Activated T-helper 1 cell treated with anti-CD3 and anti-CD28 coated beads, Interleukin-12 subunit alpha, Interleukin-12 subunit beta, Interleukin-2, Interleukin-4 antibody, amounts not matched to agents 30 ng/mL and 10 ng/mL and 1 ng/mL, durations not matched to agents 14 hours and 24 hours and 36 hours (primary cell): ENCODE measurements at regions of chr6 and their contacts with region 1.

Region 1: DNA sequence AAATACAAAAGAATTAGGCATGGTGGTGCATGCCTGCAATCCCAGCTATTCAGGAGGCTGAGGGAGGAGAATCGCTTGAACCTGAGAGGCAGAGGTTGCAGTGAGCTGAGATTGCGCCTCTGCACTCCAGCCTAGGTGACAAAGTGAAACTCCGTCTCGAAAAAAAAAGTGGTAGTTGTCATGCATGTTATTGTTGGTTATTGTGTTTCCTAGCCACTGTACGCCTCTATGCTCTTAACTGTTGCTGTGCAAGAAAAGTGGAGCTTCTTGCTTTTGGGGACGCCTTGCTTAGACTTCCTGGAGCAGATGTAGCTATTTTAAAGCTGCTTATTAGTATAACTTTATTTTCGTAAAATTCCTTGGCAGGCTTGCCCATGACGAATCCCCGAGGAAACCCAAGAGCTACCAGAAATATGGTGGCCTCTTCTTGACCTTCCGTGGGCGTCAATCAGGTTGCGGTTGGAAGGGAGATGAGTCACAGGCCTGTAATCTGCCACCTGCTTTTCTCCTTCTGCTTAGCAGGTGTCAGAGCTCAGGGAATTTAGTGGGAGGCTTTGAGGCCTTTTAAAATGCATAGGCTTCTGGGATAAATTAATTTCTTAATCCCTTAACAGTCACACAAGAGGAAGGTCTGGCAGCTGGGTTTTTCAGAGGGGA is 17.3 kb downstream of the GABRR2 start:
- DNase-seq: peak; percentile 64
- H3K4me3 Mint-ChIP-seq: peak overlapping the region; percentile 43
- H3K27ac Mint-ChIP-seq: peak overlapping the region; percentile 97
- H3K4me1 Mint-ChIP-seq: peaks cover 28% of the 10 kb centered on the region
- H3K27me3 Mint-ChIP-seq: peaks cover 2% of the 10 kb centered on the region

Region 2: GRCh38 chr6:89117211-89118108 is 180.4 kb before region 1 on chr6 and contains the start of gene SRSF12:
- intact Hi-C with region 1: no loop called
- DNase-seq: peak; percentile 3
- H3K4me3 Mint-ChIP-seq: peak within 1 kb of the TSS; percentile 75
- H3K27ac Mint-ChIP-seq: no peak within 1 kb of the TSS
- H3K4me1 Mint-ChIP-seq: peaks cover 6% of the 10 kb centered on the region
- H3K27me3 Mint-ChIP-seq: peaks cover 44% of the 10 kb centered on the region
- total RNA-seq, gene SRSF12: 0.07 and 0.10 TPM in 2 replicates

Region 3: GRCh38 chr6:89360415-89360999 is 62.7 kb after region 1 on chr6:
- intact Hi-C with region 1: loop called (anchors 2 kb)
- DNase-seq: no peak
- H3K4me3 Mint-ChIP-seq: peak overlapping the region; percentile 16
- H3K27ac Mint-ChIP-seq: peak overlapping the region; percentile 74
- H3K4me1 Mint-ChIP-seq: peaks cover 73% of the 10 kb centered on the region
- H3K27me3 Mint-ChIP-seq: no peaks in the 10 kb centered on the region